Ovary (tissue), 10 donors: ENCODE measurements at regions of chr18 and their contacts with region 1.

Region 1: DNA sequence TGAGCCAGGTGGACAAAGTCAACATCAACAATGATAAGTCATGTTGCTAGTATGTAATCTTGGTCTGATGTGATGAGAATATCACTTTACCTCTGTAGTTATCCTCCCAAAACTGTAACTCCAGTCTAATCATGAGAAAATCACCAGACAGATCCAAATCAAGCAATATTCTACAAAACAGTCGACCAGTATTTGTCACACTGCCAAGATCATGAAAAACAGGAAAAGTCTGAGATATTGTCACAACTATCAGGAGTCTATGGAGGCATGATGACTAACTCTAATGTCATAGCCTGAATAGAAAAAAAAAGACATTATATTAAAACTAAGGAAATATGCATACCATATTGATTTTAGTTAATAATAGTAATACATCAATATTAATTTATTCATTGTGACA is 1883.3 kb upstream of the CELF4 start:
- DNase-seq: no peak
- H3K4me3 ChIP-seq: no peak overlapping the region
- H3K27ac ChIP-seq: no peak overlapping the region
- H3K4me1 ChIP-seq: peaks cover 2% of the 10 kb centered on the region
- H3K27me3 ChIP-seq: no peaks in the 10 kb centered on the region
- CTCF ChIP-seq: no peak
- EP300 ChIP-seq: no peak
- POLR2A ChIP-seq: no peak

Region 2: GRCh38 chr18:39486268-39486667 is 37.3 kb after region 1 on chr18:
- intact Hi-C with region 1: loop called in 1 of 4 experiments (anchors 5 kb)
- DNase-seq: no peak
- H3K4me3 ChIP-seq: no peak overlapping the region
- H3K27ac ChIP-seq: no peak overlapping the region
- H3K4me1 ChIP-seq: no peaks in the 10 kb centered on the region
- H3K27me3 ChIP-seq: no peaks in the 10 kb centered on the region
- CTCF ChIP-seq: no peak
- EP300 ChIP-seq: no peak
- POLR2A ChIP-seq: no peak